Endothelial cell of umbilical vein (primary cell): ENCODE measurements at regions of chr1 and their contacts with region 1.

Region 1: DNA sequence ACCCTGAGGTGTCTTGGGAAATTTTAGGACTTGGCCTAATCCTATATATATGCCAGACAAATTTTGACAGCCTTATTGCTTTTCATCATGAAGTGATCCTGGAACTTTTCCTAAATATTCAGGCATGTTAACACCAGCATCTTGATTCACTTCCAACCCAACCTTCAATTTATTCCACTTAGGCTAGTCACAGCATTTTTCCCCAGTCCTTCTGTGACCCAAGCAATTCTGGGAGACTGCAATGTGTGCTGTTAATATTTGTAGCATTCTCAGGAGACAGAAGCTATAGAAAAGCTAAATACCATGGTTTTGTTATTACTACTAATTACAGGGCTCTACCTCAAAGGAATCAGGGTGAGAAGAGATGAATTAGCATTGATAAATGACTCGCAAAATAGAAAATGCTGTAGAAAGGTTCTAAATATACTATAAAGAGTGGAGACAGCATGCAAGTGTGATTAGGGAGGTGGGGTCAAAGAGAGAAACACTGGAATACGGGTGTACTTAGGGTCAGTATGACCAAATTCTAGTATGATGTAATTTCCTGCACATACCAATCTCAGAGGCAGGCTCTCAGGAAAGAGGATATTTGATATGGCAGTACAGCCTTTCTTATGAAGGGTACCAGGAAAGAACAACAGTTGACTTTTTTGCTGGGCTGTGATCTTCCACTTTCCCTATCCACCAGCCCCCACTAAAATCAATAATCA is 29.1 kb downstream of the PRRX1 start:
- DNase-seq: peak; percentile 64
- H3K4me3 ChIP-seq: no peak overlapping the region
- H3K27ac ChIP-seq: peak overlapping the region; percentile 22
- H3K4me1 ChIP-seq: peaks cover 22% of the 10 kb centered on the region
- H3K27me3 ChIP-seq: no peaks in the 10 kb centered on the region
- CTCF ChIP-seq: no peak
- POLR2A ChIP-seq: no peak

Region 2: GRCh38 chr1:170670802-170671628 is 22.0 kb before region 1 on chr1:
- CTCF ChIA-PET with region 1: interaction called, 45 read pairs
- POLR2A ChIA-PET with region 1: no interaction called
- dilution Hi-C with region 1: no loop called
- intact Hi-C with region 1: no loop called
- DNase-seq: peak; percentile 43
- H3K4me3 ChIP-seq: no peak overlapping the region
- H3K27ac ChIP-seq: no peak overlapping the region
- H3K4me1 ChIP-seq: no peaks in the 10 kb centered on the region
- H3K27me3 ChIP-seq: peaks cover 22 to 27% of the 10 kb centered on the region in 2 experiments
- CTCF ChIP-seq: peak; percentile 86 to 89
- POLR2A ChIP-seq: no peak

Region 3: GRCh38 chr1:170707959-170708655 is 15.1 kb after region 1 on chr1:
- CTCF ChIA-PET with region 1: interaction called, 25 read pairs
- POLR2A ChIA-PET with region 1: interaction called, 3 read pairs
- dilution Hi-C with region 1: no loop called
- intact Hi-C with region 1: loop called (anchors 1 kb)
- DNase-seq: peak; percentile 96
- H3K4me3 ChIP-seq: peak overlapping the region in 1 of 3 experiments; percentile 7
- H3K27ac ChIP-seq: peak overlapping the region; percentile 87
- H3K4me1 ChIP-seq: peaks cover 26% of the 10 kb centered on the region
- H3K27me3 ChIP-seq: no peaks in the 10 kb centered on the region
- CTCF ChIP-seq: no peak
- POLR2A ChIP-seq: no peak

Region 4: GRCh38 chr1:170765712-170766330 is 72.8 kb after region 1 on chr1:
- CTCF ChIA-PET with region 1: interaction called, 33 read pairs
- POLR2A ChIA-PET with region 1: no interaction called
- dilution Hi-C with region 1: no loop called
- intact Hi-C with region 1: loop called (anchors 1 kb)
- DNase-seq: peak; percentile 32
- H3K4me3 ChIP-seq: no peak overlapping the region
- H3K27ac ChIP-seq: no peak overlapping the region
- H3K4me1 ChIP-seq: no peaks in the 10 kb centered on the region
- H3K27me3 ChIP-seq: no peaks in the 10 kb centered on the region
- CTCF ChIP-seq: peak; percentile 19 to 39
- POLR2A ChIP-seq: no peak

Region 5: DNA sequence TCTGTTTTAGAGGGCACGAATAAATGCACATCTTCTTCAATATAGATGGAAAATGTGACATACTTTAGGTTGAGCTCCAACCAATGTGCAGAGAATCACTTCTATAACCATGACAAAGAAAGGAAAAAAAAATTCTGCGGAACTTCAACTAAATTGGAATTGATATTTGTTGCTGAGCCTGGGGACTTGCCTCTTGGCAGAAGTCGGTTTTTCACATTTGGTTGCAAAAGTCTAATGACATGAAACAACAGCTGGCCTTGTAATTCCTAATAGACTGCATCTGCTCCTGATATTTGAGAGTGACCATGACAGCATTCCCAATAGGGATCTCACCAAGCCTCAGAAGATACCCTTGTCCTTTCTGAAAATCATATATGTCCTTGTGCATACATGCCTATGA is 83.8 kb after region 1 on chr1:
- CTCF ChIA-PET with region 1: interaction called, 12 read pairs
- POLR2A ChIA-PET with region 1: no interaction called
- dilution Hi-C with region 1: no loop called
- intact Hi-C with region 1: no loop called
- DNase-seq: no peak
- H3K4me3 ChIP-seq: no peak overlapping the region
- H3K27ac ChIP-seq: no peak overlapping the region
- H3K4me1 ChIP-seq: no peaks in the 10 kb centered on the region
- H3K27me3 ChIP-seq: no peaks in the 10 kb centered on the region
- CTCF ChIP-seq: no peak
- POLR2A ChIP-seq: no peak

Region 6: GRCh38 chr1:170864238-170864637 is 171.2 kb after region 1 on chr1:
- CTCF ChIA-PET with region 1: no interaction called
- POLR2A ChIA-PET with region 1: no interaction called
- dilution Hi-C with region 1: no loop called
- intact Hi-C with region 1: no loop called
- DNase-seq: no peak
- H3K4me3 ChIP-seq: no peak overlapping the region
- H3K27ac ChIP-seq: no peak overlapping the region
- H3K4me1 ChIP-seq: no peaks in the 10 kb centered on the region
- H3K27me3 ChIP-seq: no peaks in the 10 kb centered on the region
- CTCF ChIP-seq: no peak
- POLR2A ChIP-seq: no peak

Region 7: DNA sequence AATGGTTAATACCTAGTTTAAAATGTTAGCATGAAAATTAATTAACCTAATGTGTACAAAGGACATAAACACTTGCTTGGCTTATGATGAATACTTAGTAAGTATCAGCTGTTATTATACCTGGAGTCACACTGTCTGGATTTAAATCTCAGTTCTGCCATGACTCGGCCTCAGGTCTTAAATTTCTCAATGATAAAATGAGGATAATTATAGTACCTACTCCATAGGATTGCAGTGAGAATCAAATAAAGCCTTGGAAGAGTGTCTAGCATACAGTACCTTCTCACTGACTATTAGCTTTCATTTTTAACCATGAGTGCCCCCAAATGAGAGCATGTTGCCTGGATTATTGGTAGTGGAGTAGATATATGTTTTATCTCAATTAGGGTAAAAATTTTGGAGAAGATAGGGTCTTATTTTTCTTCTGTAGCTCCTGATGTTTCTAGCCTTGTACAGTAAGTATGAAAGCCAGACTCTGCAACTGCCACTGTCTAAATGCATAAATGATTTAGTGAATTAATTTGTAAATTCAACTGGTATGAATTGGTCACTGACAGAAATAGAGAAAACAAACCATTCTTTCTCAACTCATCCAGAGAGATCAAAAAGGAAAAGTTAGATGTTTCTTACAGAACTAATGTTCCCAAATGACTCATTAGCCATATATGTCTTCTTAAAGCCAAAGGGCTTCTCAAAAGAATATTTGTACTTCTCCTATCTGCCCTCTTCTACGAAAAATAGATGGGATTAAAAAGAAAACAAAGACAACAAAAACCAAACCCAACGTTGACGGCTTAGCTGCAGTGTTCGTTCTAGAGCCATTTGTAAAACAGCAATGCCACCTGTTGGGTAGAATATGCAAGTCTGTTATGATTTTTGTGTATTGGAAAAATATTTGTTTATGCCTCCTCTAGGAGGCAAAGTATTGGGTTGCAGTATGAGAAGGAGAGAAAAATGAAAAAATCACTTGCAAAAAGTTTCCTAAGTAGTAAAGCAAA is 188.5 kb after region 1 on chr1:
- CTCF ChIA-PET with region 1: interaction called, 15 read pairs
- POLR2A ChIA-PET with region 1: no interaction called
- dilution Hi-C with region 1: no loop called
- intact Hi-C with region 1: loop called (anchors 1 kb)
- DNase-seq: peak; percentile 39
- H3K4me3 ChIP-seq: no peak overlapping the region
- H3K27ac ChIP-seq: no peak overlapping the region
- H3K4me1 ChIP-seq: no peaks in the 10 kb centered on the region
- H3K27me3 ChIP-seq: no peaks in the 10 kb centered on the region
- CTCF ChIP-seq: peak in 1 of 2 donors; percentile 19
- POLR2A ChIP-seq: no peak

Region 8: DNA sequence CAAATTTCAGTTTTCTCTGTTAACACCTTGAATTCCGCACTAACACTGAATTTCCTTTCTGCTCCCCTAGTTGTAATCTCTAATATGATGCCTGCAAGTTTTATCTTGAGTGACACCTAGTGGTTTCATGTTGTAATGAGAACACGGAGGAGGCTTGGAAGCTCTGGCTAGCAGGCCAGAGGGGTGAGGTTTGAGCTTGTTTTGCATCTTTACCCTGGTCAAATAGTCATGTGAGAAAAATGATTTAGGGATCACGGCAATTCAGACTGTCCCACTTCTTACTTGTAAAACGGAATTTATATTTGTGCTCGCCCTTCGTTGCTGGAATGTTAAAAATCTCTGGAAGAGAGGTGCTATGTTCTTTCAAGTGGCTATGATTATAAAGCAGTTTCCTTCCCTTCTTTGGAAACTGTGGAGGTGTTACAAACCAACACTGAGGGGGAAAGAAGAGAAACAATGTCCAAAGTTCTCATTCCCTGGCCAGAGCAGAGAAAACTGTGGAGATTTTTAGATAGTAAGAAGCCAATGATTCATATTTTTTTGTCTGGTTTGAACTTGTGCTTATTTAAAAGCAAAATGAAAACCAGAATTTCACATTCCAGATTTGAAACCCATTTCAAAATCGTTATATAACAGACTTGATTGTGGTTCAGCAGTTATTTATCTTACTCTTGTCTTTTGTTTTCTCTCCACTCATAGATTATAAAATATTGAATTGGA is 237.0 kb after region 1 on chr1:
- CTCF ChIA-PET with region 1: interaction called, 124 read pairs
- POLR2A ChIA-PET with region 1: no interaction called
- dilution Hi-C with region 1: no loop called
- intact Hi-C with region 1: loop called (anchors 1 kb)
- DNase-seq: peak; percentile 56
- H3K4me3 ChIP-seq: no peak overlapping the region
- H3K27ac ChIP-seq: no peak overlapping the region
- H3K4me1 ChIP-seq: no peaks in the 10 kb centered on the region
- H3K27me3 ChIP-seq: no peaks in the 10 kb centered on the region
- CTCF ChIP-seq: peak; percentile 56 to 59
- POLR2A ChIP-seq: no peak